ENCODE measurements at regions of chr6 and their contacts with region 1.

Region 1: DNA sequence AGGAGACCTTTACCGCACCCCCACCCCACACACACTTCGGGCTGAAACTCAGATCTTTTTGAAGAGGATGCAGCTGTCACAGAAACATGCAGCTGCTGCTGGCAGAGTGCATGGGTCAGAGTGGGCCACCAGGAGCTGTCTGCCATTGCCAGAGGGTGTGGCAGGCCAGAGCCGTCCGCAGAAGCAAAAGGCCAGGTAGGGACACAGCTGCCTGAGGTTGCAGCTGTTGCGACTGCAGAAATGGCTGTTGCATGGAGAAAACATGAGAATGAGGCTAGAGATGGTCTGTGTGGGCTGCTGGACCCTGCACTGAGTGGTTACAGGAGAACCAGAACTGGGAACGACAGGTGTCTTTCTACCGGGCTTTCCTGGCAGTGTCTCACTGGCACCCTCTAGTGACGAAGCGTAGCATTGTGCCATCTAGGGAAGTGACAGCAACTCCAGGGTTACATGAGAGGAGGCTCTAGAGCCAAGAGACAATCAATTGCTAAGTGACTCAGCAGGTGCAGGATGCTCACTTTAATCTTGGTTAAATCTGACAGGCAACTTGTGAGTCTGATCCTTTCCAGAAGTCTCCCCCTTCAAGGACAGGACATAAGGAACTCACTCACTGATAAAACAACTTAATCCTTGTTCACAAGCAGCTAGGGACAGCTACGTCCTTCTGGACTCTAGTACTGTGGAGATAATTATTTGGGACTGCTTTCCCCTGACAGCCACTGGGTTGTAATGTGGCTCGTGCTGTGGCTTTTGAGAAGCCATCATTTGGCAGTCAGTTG is 29.1 kb upstream of the SERPINB9 start:
- DNase-seq: peak; percentile 92
- H3K4me3 Mint-ChIP-seq: no peak overlapping the region
- H3K27ac Mint-ChIP-seq: peak overlapping the region; percentile 49
- H3K4me1 Mint-ChIP-seq: peaks cover 24% of the 10 kb centered on the region
- H3K27me3 Mint-ChIP-seq: peaks cover 8% of the 10 kb centered on the region

Region 2: DNA sequence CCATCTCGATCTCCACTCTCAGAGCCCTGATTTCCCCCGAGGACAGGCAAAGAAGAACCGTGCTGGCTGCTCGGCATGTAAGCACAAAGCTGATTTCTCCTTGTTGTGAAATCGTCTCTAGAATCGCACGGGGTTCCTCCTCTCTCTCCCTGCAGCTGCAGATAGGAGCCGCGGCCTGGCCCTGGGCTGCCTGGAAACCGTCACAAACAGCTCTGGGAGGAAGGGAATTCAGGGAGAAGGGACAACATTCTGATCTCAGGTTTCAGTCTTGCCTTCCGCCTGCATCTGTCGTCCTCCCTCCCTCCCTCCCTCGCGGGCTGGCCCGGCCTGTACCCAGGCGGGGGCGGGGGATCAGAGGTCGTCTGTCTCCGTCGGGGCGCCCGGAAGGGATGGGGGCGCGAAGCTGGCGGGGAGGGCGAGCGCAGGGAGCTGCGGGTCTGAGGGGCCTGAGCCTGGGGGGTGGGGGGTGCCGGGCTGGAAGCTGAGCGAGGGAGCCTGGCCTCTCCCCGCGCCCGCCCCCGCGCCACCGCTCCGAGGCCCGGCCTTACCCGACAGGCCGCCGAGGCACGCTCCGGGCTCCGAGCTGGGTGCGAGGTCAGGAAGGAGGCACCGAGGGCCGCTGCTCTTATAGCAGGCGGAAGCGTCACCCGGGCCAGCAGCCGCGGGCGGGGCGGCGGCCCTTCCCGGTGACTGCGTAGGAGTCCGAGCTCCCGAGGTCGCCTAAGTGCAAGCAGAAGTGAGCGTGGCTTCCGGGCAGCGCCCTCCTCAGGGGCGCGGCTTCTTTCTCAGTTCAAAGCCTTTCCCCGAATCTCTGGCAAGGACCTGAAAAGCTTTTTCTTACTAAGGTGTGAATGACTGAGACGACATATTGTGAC is 90.7 kb before region 1 on chr6 and contains the start of gene SERPINB1:
- CTCF ChIA-PET with region 1: interaction called, 80 read pairs
- DNase-seq: peak; percentile 84
- H3K4me3 Mint-ChIP-seq: peak within 1 kb of the TSS; percentile 85
- H3K27ac Mint-ChIP-seq: peak within 1 kb of the TSS; percentile 84
- H3K4me1 Mint-ChIP-seq: peaks cover 61% of the 10 kb centered on the region
- H3K27me3 Mint-ChIP-seq: no peaks in the 10 kb centered on the region

Region 3: DNA sequence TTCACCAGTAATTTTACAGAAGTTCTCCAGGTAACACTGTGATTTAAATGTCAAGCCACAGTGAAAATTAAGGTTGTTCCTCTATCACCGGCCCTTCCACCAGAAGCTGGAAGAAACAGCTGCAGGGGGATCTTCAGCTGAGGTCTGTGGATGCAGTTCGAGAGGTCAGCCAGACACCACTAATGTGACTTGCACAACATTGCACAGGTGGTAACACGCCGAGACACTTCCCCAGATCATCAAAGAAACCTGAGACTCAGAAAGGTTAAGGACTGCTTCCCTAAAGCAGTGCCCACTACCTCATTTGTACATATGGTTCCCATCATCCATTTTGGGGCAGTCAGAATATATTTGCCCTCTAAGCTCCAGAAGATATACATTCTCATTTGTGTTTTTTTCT is 21.0 kb before region 1 on chr6:
- CTCF ChIA-PET with region 1: interaction called, 20 read pairs
- DNase-seq: no peak
- H3K4me3 Mint-ChIP-seq: no peak overlapping the region
- H3K27ac Mint-ChIP-seq: no peak overlapping the region
- H3K4me1 Mint-ChIP-seq: peaks cover 29% of the 10 kb centered on the region
- H3K27me3 Mint-ChIP-seq: peaks cover 1% of the 10 kb centered on the region

Region 4: GRCh38 chr6:2917065-2917464 is 15.1 kb before region 1 on chr6:
- CTCF ChIA-PET with region 1: interaction called, 20 read pairs
- DNase-seq: no peak
- H3K4me3 Mint-ChIP-seq: no peak overlapping the region
- H3K27ac Mint-ChIP-seq: no peak overlapping the region
- H3K4me1 Mint-ChIP-seq: peaks cover 22% of the 10 kb centered on the region
- H3K27me3 Mint-ChIP-seq: peaks cover 18% of the 10 kb centered on the region

Region 5: GRCh38 chr6:2988426-2989331 is 56.5 kb after region 1 on chr6:
- CTCF ChIA-PET with region 1: interaction called, 10 read pairs
- DNase-seq: peak; percentile 84
- H3K4me3 Mint-ChIP-seq: peak overlapping the region; percentile 90
- H3K27ac Mint-ChIP-seq: peak overlapping the region; percentile 98
- H3K4me1 Mint-ChIP-seq: peaks cover 32% of the 10 kb centered on the region
- H3K27me3 Mint-ChIP-seq: peaks cover 16% of the 10 kb centered on the region

Measured in activated naive CD4-positive, alpha-beta T cell treated with anti-CD3 and anti-CD28 coated beads, Interleukin-2, amount 10 ng/mL, durations not matched to agents 7 days and 5 days (primary cell).